Activated T-helper 1 cell treated with anti-CD3 and anti-CD28 coated beads, Interleukin-12 subunit alpha, Interleukin-12 subunit beta, Interleukin-2, Interleukin-4 antibody, amounts not matched to agents 30 ng/mL and 10 ng/mL and 1 ng/mL, durations not matched to agents 14 hours and 24 hours and 36 hours (primary cell): ENCODE measurements at regions of chr1 and their contacts with region 1.

Region 1: DNA sequence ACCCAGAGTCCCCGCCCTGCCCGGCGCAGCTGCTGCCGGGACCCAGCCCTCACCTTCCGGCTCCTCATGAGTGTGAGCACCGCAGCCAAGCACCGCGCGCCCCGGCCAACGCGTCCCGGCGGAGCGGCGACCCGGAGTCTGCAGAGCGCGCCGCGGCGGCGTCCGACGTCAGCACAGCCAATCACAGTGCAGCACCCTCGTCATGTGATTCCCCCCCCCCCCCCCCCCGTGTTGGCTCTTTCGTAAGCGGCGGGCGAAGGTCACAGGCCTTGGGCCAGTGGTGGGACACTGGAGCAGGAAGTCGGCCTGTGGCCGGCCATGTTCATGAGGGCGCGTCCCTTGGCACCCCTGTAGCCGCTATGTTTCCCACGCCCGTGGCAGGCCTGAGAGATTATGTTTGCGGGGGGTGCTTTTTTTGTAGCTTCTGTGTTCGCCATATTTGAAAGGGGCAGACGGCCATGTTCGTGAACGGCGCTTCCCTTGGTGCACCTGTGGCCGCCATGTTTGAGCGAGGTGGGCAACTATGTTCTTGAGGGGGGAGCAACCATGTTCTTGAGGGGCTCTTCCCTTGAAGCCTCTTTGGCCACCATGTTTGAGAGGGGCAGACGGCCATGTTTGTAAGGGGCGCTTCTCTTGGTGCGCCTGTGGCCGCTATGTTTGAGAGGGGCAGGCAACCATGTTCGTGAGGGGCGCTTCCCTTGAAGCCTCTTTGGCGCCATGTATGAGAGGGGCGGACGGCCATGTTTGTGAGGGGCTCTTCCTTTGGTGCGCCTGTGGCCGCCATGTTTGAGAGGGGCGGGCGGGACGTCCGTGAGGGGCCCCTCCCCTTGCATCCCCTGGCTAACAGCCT is at the start of gene C1orf174:
- DNase-seq: peak; percentile 90
- H3K4me3 Mint-ChIP-seq: peak within 1 kb of the TSS; percentile 90
- H3K27ac Mint-ChIP-seq: peak within 1 kb of the TSS; percentile 100
- H3K4me1 Mint-ChIP-seq: peaks cover 49% of the 10 kb centered on the region
- H3K27me3 Mint-ChIP-seq: no peaks in the 10 kb centered on the region
- total RNA-seq, gene C1orf174: 45.1 TPM in 2 replicates

Region 2: GRCh38 chr1:2391041-2391930 is 1509.1 kb before region 1 on chr1 and contains the starts of genes MORN1 and RER1:
- intact Hi-C with region 1: loop called (anchors 5 kb)
- DNase-seq: peak; percentile 99
- H3K4me3 Mint-ChIP-seq: peak within 1 kb of the TSS; percentile 88
- H3K27ac Mint-ChIP-seq: peak within 1 kb of the TSS; percentile 82
- H3K4me1 Mint-ChIP-seq: peaks cover 28% of the 10 kb centered on the region
- H3K27me3 Mint-ChIP-seq: no peaks in the 10 kb centered on the region
- total RNA-seq, gene MORN1: 8.4 and 8.6 TPM in 2 replicates
- total RNA-seq, gene RER1: 161 and 177 TPM in 2 replicates

Region 3: GRCh38 chr1:2642560-2643413 is 1257.6 kb before region 1 on chr1:
- intact Hi-C with region 1: loop called (anchors 10 kb)
- DNase-seq: peak; percentile 93
- H3K4me3 Mint-ChIP-seq: peak overlapping the region; percentile 85
- H3K27ac Mint-ChIP-seq: peak overlapping the region; percentile 93
- H3K4me1 Mint-ChIP-seq: no peaks in the 10 kb centered on the region
- H3K27me3 Mint-ChIP-seq: no peaks in the 10 kb centered on the region

Region 4: DNA sequence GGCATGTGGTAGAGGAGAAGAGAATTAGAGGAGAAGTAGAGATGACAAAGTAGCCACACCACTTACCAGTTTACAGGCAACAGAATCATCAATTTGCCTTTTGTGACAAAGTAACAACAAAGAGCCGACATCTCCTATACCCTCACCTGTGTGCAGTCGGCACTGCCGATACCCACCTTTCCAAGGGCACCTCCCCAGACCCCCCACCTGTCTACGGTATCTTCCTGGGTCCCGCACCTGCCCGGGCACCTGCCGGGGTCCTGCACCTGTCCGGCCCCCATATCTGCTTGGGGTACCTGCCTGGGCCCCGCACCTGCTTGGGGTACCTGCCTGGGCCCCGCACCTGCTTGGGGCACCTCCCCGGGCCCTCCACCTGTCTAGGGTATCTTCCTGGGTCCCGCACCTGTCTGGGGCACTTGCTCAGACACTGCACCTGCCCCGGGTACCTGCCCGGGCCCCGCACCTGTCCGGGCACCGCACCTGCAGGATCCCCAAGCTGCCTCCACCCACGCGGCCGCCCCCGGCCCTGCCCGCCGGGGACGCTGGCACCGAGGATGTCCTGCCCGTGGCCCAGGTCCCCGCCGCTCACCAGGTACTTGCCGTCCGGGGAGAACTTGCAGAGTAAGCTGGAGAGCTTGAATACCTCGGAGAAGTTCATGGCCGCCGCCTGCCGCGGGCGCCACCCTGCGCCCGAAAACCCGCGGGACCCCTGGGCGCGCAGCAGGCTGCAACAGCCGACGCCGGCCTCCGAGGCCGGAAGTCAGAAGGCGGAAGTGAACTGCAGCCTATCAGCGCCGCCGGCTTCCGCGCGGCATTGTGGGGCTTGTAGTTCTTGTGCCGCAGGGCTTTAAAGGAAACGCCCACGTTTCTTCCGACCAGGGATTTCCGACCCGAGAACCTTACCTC is 250.7 kb before region 1 on chr1 and contains the start of gene WRAP73:
- intact Hi-C with region 1: loop called (anchors 1 kb)
- DNase-seq: peak; percentile 86
- H3K4me3 Mint-ChIP-seq: peak within 1 kb of the TSS; percentile 84
- H3K27ac Mint-ChIP-seq: peak within 1 kb of the TSS; percentile 58
- H3K4me1 Mint-ChIP-seq: peaks cover 23% of the 10 kb centered on the region
- H3K27me3 Mint-ChIP-seq: peaks cover 25% of the 10 kb centered on the region
- total RNA-seq, gene WRAP73: 44.9 and 45.5 TPM in 2 replicates

Region 5: DNA sequence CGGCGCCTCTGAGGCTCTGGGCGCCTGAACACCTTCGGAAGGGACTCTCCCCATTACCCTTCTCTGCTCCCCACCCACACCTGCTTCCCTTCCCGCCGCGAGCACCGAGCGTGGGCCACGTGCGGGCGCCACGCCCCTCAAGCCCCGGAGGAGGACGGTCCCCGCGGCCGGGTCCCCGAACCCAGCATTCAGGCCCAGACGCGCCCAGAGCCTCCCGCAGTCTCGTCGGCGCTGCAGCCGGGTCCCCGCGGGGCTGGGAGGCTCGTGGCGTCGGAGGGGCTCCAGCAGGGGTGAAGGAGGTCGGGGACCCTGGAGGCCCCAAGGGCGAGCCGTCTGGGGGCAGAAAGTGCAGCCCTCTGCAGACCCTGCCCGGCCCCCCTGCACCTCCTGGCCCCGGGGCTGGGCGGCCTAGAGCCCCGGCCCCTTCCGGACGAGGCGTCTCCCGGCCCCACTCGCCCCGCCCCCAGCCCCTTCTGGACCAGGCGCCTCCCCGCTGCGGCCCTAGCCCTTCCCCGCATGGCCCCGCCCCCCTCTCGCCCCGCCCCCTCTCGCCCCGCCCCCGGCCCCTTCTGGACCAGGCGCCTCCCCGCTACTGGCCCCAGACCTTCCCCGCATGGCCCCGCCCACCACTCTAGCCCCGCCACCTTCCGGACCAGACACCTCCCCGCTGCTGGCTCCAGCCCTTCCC is 128.2 kb before region 1 on chr1:
- intact Hi-C with region 1: loop called (anchors 1 kb)
- DNase-seq: peak; percentile 80
- H3K4me3 Mint-ChIP-seq: peak overlapping the region; percentile 75
- H3K27ac Mint-ChIP-seq: peak overlapping the region; percentile 52
- H3K4me1 Mint-ChIP-seq: peaks cover 8% of the 10 kb centered on the region
- H3K27me3 Mint-ChIP-seq: peaks cover 9% of the 10 kb centered on the region

Region 6: DNA sequence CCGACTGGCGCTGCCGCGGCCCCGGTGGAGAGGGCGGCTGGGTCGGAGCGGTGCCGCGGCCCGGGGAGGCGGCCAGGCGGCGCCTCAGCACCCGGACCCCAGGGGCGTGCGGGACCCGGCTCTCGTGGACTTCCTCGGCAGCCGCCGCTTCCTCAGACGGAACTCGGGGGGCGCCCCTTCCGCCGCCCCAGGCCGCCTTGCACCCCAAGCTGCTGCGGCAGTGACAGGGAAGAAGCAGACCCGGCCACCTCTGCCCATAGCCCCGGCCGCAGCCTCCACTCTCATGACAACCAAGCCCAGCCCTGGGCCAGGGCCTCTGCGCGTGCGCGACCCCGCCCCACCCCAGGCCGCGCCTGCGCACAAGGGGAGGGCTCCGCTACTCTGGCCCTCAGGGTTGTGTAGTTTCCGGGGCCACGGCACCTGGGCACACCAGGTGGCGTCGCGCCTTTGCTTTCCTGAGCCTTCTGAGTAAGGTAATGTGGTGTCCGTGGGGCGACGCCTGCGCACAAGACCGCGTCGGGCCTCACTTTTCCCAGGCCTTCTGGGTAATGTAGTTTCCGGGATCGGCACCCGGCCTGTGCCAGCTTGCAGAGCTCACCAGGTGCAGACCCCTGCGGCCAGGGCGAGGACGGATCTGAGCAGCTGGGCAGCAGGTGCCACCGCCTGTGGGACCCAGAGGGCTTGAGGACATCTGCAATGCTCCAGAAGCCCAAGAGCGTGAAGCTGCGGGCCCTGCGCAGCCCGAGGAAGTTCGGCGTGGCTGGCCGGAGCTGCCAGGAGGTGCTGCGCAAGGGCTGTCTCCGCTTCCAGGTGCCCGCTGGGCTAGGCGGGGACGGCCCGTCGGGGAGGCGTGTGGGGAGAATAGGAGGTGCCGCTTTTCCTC is 43.2 kb before region 1 on chr1 and contains the starts of genes CEP104 and DFFB:
- intact Hi-C with region 1: loop called (anchors 1 kb)
- DNase-seq: peak; percentile 97
- H3K4me3 Mint-ChIP-seq: peak within 1 kb of the TSS; percentile 94
- H3K27ac Mint-ChIP-seq: peak within 1 kb of the TSS; percentile 83
- H3K4me1 Mint-ChIP-seq: peaks cover 15% of the 10 kb centered on the region
- H3K27me3 Mint-ChIP-seq: no peaks in the 10 kb centered on the region
- total RNA-seq, gene CEP104: 43.4 and 55.5 TPM in 2 replicates
- total RNA-seq, gene DFFB: 13.7 and 15.8 TPM in 2 replicates